ENCODE measurements at regions of chr2 and their contacts with region 1.

Region 1: GRCh38 chr2:178882666-178883440 is 75.6 kb upstream of the TTN start:
- DNase-seq: no peak

Region 2: GRCh38 chr2:178796079-178796677 is 86.7 kb before region 1 on chr2:
- intact Hi-C with region 1: no loop called
- DNase-seq: no peak

Region 3: GRCh38 chr2:178829299-178829960 is 53.4 kb before region 1 on chr2:
- intact Hi-C with region 1: loop called (anchors 5 kb)
- DNase-seq: no peak

Measured in cardiac septum (tissue), 1 donor.